ENCODE measurements at regions of chr11 and their contacts with region 1.

Region 1: GRCh38 chr11:62054484-62055121 is 69.2 kb upstream of the INCENP start:
- DNase-seq: no peak
- H3K4me3 ChIP-seq: no peak overlapping the region
- H3K27ac ChIP-seq: no peak overlapping the region
- H3K4me1 ChIP-seq: no peaks in the 10 kb centered on the region
- H3K27me3 ChIP-seq: no peaks in the 10 kb centered on the region
- CTCF ChIP-seq: peak in 1 of 6 experiments; percentile 9
- POLR2A ChIP-seq: no peak

Region 2: DNA sequence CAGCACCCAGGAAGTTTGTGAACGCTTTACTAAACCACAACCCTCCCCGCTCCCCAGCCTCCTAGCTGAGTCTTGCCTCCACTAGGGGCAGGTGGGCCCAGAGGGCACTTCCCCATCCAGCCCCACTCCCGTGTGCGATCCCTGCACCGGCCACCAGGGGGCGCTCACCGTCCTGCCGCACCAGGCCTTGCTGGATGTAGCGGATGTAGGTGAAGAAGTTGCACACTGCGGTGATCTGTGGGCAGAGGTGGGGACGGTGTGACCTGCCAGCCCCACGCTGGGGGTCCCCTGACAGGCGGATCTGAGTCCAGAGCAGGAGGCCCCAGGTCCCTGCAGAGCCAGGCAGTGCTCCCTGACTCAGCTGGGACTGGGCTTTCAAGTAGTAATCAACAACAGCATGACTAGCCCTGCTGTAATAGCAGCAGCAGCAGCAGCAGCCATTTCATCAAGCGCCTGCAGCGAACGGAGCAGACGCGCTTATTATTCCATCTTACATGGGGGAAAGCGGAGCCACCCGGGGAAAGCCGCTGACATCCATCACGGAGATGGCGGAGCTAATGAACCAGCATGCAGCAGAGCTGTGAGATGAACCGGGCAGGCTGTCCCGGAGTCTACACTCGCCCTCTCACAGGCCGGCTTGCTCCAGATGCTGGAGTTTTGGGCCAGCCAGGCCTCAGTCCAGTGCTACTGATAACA is 155.3 kb before region 1 on chr11:
- intact Hi-C with region 1: loop called (anchors 5 kb)
- DNase-seq: peak; percentile 66 to 70
- H3K4me3 ChIP-seq: no peak overlapping the region
- H3K27ac ChIP-seq: peak overlapping the region in 1 of 3 donors; percentile 9
- H3K4me1 ChIP-seq: peaks cover 0 to 5% of the 10 kb centered on the region in 2 donors
- H3K27me3 ChIP-seq: no peaks in the 10 kb centered on the region
- CTCF ChIP-seq: peak; percentile 92 to 100 (median 98)
- POLR2A ChIP-seq: no peak

Region 3: GRCh38 chr11:62352355-62353336 is 298.0 kb after region 1 on chr11:
- intact Hi-C with region 1: no loop called
- DNase-seq: no peak
- H3K4me3 ChIP-seq: no peak overlapping the region
- H3K27ac ChIP-seq: no peak overlapping the region
- H3K4me1 ChIP-seq: no peaks in the 10 kb centered on the region
- H3K27me3 ChIP-seq: no peaks in the 10 kb centered on the region
- CTCF ChIP-seq: no peak
- POLR2A ChIP-seq: no peak

Measured in thyroid gland (tissue), 4 donors.